Posterior cingulate gyrus (tissue), 11 donors: ENCODE measurements at regions of chr3 and their contacts with region 1.

Region 1: GRCh38 chr3:104460477-104461406 is 906.0 kb upstream of the ALCAM start:
- DNase-seq: no peak

Region 2: GRCh38 chr3:104273046-104273649 is 187.6 kb before region 1 on chr3:
- intact Hi-C with region 1: loop called (anchors 2 kb)
- DNase-seq: no peak